Transverse colon (tissue), 4 donors: ENCODE measurements at regions of chr6 and their contacts with region 1.

Region 1: DNA sequence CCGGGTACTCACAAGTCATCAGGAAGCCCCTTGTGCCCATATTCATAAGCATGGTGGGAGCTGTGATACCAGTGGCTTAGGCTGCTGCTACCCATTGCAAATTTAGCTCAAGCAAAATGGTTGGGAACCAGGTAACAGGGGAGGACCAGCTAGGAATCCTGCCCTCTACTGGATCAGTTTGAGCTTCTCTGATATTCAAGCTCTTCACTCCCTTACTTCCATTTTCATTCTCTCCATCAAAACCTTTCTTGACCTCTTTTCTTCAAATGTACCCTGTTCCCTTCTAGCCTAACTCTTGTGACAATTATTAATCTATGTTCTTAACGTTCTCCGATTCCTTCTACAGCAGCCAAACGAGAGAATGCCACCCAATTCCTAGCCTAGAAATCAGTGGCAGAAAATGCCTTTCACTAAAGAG is 9.7 kb downstream of the NOL7 start:
- DNase-seq: no peak
- H3K4me3 ChIP-seq: no peak overlapping the region
- H3K27ac ChIP-seq: no peak overlapping the region
- H3K4me1 ChIP-seq: no peaks in the 10 kb centered on the region
- H3K27me3 ChIP-seq: no peaks in the 10 kb centered on the region
- CTCF ChIP-seq: peak in 4 of 5 experiments; percentile 22 to 40 (median 28)
- EP300 ChIP-seq: no peak
- POLR2A ChIP-seq: no peak

Region 2: DNA sequence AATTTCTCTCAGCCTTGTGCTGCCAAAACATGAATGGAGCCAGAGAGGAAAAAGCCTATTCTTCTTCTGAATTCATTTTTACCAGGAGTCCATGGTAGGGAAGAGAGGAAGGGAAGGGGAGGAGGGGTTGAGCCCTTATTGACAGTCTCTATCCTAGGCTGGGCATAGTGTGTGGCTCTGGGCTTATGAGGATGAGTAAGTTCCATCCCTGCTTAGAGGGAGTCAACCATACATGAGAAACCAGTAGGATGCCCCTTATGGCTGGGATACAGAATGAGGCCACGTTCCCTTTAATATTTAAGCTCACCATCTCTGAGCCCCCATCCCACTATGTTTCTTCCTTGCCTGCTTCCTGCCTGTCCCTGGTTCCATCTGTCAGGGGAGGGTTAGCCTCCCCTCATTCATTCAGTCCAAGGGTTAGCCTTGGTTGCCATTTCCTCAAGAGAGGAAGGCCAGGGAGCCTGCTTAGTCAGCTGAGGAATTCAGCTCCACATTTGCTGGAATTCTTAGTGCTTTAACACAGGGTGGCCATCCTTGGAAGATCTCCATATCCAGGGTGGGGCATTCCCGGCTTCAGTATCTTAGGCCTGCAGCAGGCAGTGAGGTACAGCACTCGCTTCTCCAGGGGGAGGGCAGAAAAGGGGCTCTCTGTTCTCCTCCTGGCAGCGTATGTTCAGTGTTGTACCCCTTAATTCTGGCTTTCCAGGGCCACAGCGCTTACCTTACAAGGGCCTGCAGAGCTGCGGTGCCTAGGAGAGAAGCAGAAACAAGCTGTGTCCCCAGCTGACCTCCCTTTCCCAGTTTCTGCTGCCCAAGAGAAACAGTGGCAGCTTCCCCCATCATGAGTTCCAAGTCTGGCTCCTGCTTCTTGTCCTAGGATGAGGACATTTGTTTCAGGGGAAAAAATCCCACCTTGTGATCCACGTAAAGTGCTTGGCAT is 38.0 kb before region 1 on chr6:
- in situ Hi-C with region 1: no loop called
- intact Hi-C with region 1: loop called (anchors 2 kb)
- DNase-seq: no peak
- H3K4me3 ChIP-seq: no peak overlapping the region
- H3K27ac ChIP-seq: no peak overlapping the region
- H3K4me1 ChIP-seq: no peaks in the 10 kb centered on the region
- H3K27me3 ChIP-seq: no peaks in the 10 kb centered on the region
- CTCF ChIP-seq: no peak
- EP300 ChIP-seq: no peak
- POLR2A ChIP-seq: no peak